AG04450 (cell line): ENCODE measurements at regions of chr12 and their contacts with region 1.

Region 1: GRCh38 chr12:56751712-56752598 is at the start of gene PRIM1:
- DNase-seq: peak; percentile 10
- H3K4me3 ChIP-seq: peak within 1 kb of the TSS; percentile 87
- H3K27ac ChIP-seq: peak within 1 kb of the TSS; percentile 39
- H3K27me3 ChIP-seq: no peaks in the 10 kb centered on the region
- CTCF ChIP-seq: peak; percentile 23; the same call in 1 of the 2 replicates
- polyA plus RNA-seq, gene PRIM1: 6.2 and 6.7 TPM in 2 replicates

Region 2: DNA sequence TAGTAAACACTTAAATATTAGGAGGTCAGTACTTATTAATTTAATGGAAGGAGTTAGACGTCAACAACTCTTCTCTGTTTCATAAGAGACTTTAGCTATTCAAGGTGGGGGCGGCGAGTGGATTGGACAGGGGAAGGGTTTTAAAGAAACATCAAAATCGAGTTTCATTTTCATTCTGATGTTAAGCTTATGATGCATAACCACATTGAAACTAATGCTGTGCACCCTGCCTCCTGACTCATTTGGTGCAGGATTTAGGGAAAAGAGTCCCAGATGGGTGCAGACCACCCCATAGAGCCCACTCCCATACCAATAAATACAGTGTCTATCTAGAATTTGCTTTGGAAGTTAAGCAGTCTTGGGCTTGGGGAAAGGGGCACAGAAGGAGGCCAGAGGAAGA is 247.0 kb after region 1 on chr12:
- CTCF ChIA-PET with region 1: interaction called, 83 read pairs
- POLR2A ChIA-PET with region 1: no interaction called
- DNase-seq: no peak
- H3K4me3 ChIP-seq: no peak overlapping the region
- H3K27ac ChIP-seq: no peak overlapping the region
- H3K27me3 ChIP-seq: no peaks in the 10 kb centered on the region
- CTCF ChIP-seq: no peak

Region 3: DNA sequence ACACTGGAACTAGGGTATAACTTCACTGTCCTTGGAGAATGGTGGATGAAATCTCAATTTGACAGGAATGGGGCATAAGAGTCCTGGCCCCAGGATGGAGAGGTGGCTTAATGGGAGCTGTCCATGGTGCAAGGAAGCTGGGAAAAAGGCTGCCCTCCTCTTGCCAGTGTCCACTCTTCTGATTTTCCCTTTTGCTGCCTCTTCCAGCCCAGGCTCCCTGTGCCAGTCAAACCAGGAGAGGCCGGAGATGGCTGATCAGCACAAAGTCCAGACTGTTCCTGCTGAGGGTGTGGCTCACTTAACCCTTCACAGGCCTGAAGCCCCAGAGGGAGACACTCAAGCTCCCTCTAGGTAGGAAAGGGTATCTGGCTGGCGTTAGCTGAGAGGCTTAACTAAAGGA is 297.9 kb after region 1 on chr12 and contains the start of gene MYO1A:
- CTCF ChIA-PET with region 1: interaction called, 13 read pairs
- POLR2A ChIA-PET with region 1: no interaction called
- DNase-seq: no peak
- H3K4me3 ChIP-seq: no peak within 1 kb of the TSS
- H3K27ac ChIP-seq: no peak within 1 kb of the TSS
- H3K27me3 ChIP-seq: peaks cover 8% of the 10 kb centered on the region
- CTCF ChIP-seq: no peak
- polyA plus RNA-seq, gene MYO1A: not detected in 2 replicates

Region 4: GRCh38 chr12:57069523-57069922 is 317.6 kb after region 1 on chr12:
- CTCF ChIA-PET with region 1: no interaction called
- POLR2A ChIA-PET with region 1: no interaction called
- DNase-seq: peak; percentile 73
- H3K4me3 ChIP-seq: no peak overlapping the region
- H3K27ac ChIP-seq: no peak overlapping the region
- H3K27me3 ChIP-seq: no peaks in the 10 kb centered on the region
- CTCF ChIP-seq: peak; percentile 90